B cell (primary cell): ENCODE measurements at regions of chr19 and their contacts with region 1.

Region 1: GRCh38 chr19:40750059-40750873 is at the start of gene ACTMAP:
- DNase-seq: peak; percentile 100
- ATAC-seq: peak; percentile 88
- H3K4me3 ChIP-seq: peak within 1 kb of the TSS; percentile 86 to 98 (median 89)
- H3K4me3 Mint-ChIP-seq: peak within 1 kb of the TSS; percentile 93
- H3K27ac ChIP-seq: peak within 1 kb of the TSS; percentile 94 to 97
- H3K27ac Mint-ChIP-seq: peak within 1 kb of the TSS; percentile 95
- H3K4me1 ChIP-seq: peaks cover 29 to 54% of the 10 kb centered on the region in 2 donors
- H3K4me1 Mint-ChIP-seq: peaks cover 41% of the 10 kb centered on the region
- H3K27me3 ChIP-seq: no peaks in the 10 kb centered on the region
- H3K27me3 Mint-ChIP-seq: no peaks in the 10 kb centered on the region
- CTCF ChIP-seq: no peak
- total RNA-seq, gene ACTMAP: 9.8 and 10.2 TPM in 2 replicates

Region 2: DNA sequence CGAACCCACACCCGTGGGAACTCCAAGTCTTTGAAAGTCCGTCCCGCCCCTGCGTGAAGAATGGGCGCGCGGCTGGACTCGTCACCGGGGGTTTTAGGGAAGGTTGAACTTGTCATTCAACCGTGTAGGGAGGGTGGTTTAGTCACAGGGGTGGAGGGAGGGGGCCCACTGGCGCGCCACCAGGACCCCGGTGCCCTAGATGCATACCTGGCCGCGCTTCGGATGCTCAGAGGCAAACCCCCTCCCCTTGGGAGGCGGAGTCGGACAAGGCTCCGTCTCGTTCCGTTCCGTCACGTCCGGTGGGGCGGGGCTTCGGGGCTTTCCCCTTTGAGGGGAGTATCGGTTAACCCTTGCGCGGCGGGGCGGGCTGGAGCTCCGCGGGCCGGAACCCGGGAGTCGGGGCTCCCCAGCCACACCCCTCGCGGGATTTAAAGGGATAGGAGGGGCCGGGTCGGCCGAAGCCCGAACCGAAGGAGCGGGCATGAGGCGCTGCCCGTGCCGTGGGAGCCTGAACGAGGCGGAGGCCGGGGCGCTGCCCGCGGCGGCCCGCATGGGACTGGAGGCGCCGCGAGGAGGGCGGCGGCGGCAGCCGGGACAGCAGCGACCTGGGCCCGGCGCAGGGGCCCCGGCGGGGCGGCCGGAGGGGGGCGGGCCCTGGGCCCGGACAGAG is 33.5 kb before region 1 on chr19 and contains the starts of genes COQ8B and ITPKC:
- CTCF ChIA-PET with region 1: interaction called, 7 read pairs
- POLR2A ChIA-PET with region 1: interaction called, 7 read pairs
- intact Hi-C with region 1: loop called (anchors 1 kb)
- DNase-seq: peak; percentile 98
- ATAC-seq: peak; percentile 75
- H3K4me3 ChIP-seq: peak within 1 kb of the TSS; percentile 79 to 90 (median 83)
- H3K4me3 Mint-ChIP-seq: peak within 1 kb of the TSS; percentile 88
- H3K27ac ChIP-seq: peak within 1 kb of the TSS; percentile 87 to 90
- H3K27ac Mint-ChIP-seq: peak within 1 kb of the TSS; percentile 97
- H3K4me1 ChIP-seq: peaks cover 47 to 64% of the 10 kb centered on the region in 2 donors
- H3K4me1 Mint-ChIP-seq: peaks cover 63% of the 10 kb centered on the region
- H3K27me3 ChIP-seq: no peaks in the 10 kb centered on the region
- H3K27me3 Mint-ChIP-seq: no peaks in the 10 kb centered on the region
- CTCF ChIP-seq: peak; percentile 22
- total RNA-seq, gene COQ8B: 55.4 and 58.9 TPM in 2 replicates
- total RNA-seq, gene ITPKC: 13.1 and 16.0 TPM in 2 replicates

Region 3: DNA sequence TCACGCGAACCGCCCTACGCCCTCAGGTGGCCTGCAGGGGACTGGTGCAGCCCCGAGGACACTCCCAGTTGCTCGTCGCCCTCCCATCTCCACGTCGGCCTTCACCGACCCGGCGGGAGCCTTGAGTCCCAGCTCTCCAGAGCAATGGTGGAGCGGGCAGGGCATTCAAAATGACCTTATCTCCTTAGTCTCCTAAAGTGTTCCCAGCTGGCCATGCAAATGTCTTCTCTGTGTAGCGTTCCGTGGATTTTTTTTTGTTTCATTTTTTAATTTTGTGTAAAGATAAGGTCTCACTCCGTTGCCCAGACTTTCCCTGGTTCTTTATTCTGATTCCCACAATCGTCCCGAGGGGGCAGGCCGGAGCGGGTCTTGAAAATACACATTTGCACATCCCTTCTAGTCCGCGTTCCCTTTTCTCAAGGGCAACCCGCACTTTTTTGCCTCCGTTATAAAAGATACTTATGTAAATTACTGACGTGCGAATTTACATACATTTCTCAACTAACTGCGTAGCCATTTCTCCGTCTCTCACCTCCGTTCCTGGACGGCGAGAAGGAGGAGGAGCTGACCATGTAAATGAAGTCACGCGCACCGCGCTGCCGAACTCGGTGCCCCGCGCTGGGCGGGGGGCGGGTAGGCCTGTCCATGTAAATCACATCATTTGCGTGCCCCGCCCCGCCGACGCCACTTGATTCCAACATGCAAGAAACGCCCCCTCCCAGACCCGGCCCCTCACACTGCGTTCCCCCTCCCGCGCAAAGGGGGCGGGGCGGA is 48.1 kb after region 1 on chr19:
- CTCF ChIA-PET with region 1: interaction called, 11 read pairs
- POLR2A ChIA-PET with region 1: interaction called, 19 read pairs
- intact Hi-C with region 1: loop called (anchors 1 kb)
- DNase-seq: peak; percentile 100
- ATAC-seq: peak; percentile 83
- H3K4me3 ChIP-seq: peak overlapping the region; percentile 59 to 84 (median 67)
- H3K4me3 Mint-ChIP-seq: peak overlapping the region; percentile 90
- H3K27ac ChIP-seq: peak overlapping the region; percentile 85 to 90
- H3K27ac Mint-ChIP-seq: peak overlapping the region; percentile 98
- H3K4me1 ChIP-seq: peaks cover 49% of the 10 kb centered on the region in 2 donors
- H3K4me1 Mint-ChIP-seq: peaks cover 53% of the 10 kb centered on the region
- H3K27me3 ChIP-seq: no peaks in the 10 kb centered on the region
- H3K27me3 Mint-ChIP-seq: no peaks in the 10 kb centered on the region
- CTCF ChIP-seq: peak; percentile 56

Region 4: GRCh38 chr19:40813182-40813958 is 63.1 kb after region 1 on chr19:
- CTCF ChIA-PET with region 1: interaction called, 26 read pairs
- POLR2A ChIA-PET with region 1: interaction called, 5 read pairs
- intact Hi-C with region 1: loop called (anchors 2 kb)
- DNase-seq: no peak
- ATAC-seq: no peak
- H3K4me3 ChIP-seq: no peak overlapping the region
- H3K4me3 Mint-ChIP-seq: peak overlapping the region; percentile 97
- H3K27ac ChIP-seq: no peak overlapping the region
- H3K27ac Mint-ChIP-seq: no peak overlapping the region
- H3K4me1 ChIP-seq: peaks cover 13 to 35% of the 10 kb centered on the region in 2 donors
- H3K4me1 Mint-ChIP-seq: peaks cover 35% of the 10 kb centered on the region
- H3K27me3 ChIP-seq: no peaks in the 10 kb centered on the region
- H3K27me3 Mint-ChIP-seq: no peaks in the 10 kb centered on the region
- CTCF ChIP-seq: no peak

Region 5: DNA sequence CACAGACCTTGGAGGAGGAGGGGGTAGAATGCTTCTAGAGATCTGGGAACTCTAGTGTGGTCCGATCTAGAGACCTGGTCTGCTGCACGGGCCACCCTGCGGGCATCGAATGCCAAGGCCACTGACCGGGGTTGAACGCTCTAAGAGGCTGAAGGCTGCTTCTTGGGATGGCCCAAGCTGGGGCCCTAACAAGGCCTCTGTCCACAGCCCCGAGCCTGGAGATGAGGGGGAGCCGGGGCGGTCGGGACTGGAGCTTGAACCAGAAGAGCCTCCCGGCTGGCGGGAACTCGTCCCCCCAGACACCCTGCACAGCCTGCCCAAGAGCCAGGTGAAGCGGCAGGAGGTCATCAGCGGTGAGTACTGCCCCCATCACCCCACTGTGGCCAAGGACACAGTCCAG is 1148.0 kb after region 1 on chr19:
- CTCF ChIA-PET with region 1: no interaction called
- POLR2A ChIA-PET with region 1: interaction called, 12 read pairs
- intact Hi-C with region 1: no loop called
- DNase-seq: no peak
- ATAC-seq: no peak
- H3K4me3 ChIP-seq: no peak overlapping the region
- H3K4me3 Mint-ChIP-seq: no peak overlapping the region
- H3K27ac ChIP-seq: no peak overlapping the region
- H3K27ac Mint-ChIP-seq: no peak overlapping the region
- H3K4me1 ChIP-seq: peaks cover 0 to 4% of the 10 kb centered on the region in 2 donors
- H3K4me1 Mint-ChIP-seq: peaks cover 8% of the 10 kb centered on the region
- H3K27me3 ChIP-seq: no peaks in the 10 kb centered on the region
- H3K27me3 Mint-ChIP-seq: no peaks in the 10 kb centered on the region
- CTCF ChIP-seq: no peak